ENCODE measurements at regions of chr19 and their contacts with region 1.

Region 1: GRCh38 chr19:7575434-7576040 is 20.1 kb upstream of the CAMSAP3 start:
- DNase-seq: peak; percentile 56
- H3K27ac ChIP-seq: no peak overlapping the region
- CTCF ChIP-seq: no peak

Region 2: DNA sequence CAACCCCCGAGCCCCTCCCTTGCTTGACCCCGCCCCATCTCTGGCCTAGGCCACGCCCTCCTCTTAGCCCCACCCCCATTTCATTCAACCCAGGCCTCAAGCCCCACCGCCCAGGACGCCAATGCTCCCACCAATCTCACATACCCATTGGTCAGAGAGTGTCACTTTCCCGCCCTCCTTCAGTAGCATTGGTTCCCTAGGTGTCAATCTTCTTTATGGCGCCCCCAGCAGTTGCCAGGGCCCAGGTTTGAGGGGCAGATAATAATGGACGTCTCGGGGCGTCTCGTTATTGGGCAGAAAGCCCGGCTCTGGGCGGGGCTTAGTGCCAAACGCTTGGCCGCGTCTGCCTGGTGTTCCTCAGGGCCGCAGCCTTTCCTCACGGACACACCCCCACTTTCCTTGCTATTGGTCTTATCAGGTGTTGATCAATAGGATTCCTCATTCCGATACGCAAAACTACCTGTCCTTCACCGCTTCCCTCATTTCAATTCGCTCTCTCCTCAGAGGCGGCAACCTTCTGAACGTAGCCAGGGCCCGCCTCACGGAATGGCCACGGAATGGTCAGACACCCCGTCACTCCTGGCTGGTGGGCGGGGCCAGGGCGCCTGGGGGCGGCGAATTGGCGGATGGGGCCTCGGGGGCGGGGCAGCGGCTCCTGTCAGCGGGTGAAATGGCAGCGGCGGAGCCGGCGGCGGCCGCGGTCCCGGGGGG is 254.2 kb after region 1 on chr19 and contains the start of gene EVI5L:
- CTCF ChIA-PET with region 1: no interaction called
- POLR2A ChIA-PET with region 1: interaction called, 11 read pairs
- DNase-seq: peak; percentile 99
- H3K27ac ChIP-seq: peak within 1 kb of the TSS; percentile 94
- CTCF ChIP-seq: no peak